SK-N-SH (cell line): ENCODE measurements at regions of chr9 and their contacts with region 1.

Region 1: GRCh38 chr9:2727966-2728613 is 10.8 kb downstream of the KCNV2 start:
- DNase-seq: peak; percentile 40
- H3K4me3 ChIP-seq: no peak overlapping the region
- H3K27ac ChIP-seq: no peak overlapping the region
- H3K4me1 ChIP-seq: peaks cover 7 to 12% of the 10 kb centered on the region in 2 experiments; a peak in 2 of 4 replicates
- H3K27me3 ChIP-seq: no peaks in the 10 kb centered on the region
- CTCF ChIP-seq: peak; percentile 65
- EP300 ChIP-seq: no peak
- RAD21 ChIP-seq: peak; percentile 88

Region 2: DNA sequence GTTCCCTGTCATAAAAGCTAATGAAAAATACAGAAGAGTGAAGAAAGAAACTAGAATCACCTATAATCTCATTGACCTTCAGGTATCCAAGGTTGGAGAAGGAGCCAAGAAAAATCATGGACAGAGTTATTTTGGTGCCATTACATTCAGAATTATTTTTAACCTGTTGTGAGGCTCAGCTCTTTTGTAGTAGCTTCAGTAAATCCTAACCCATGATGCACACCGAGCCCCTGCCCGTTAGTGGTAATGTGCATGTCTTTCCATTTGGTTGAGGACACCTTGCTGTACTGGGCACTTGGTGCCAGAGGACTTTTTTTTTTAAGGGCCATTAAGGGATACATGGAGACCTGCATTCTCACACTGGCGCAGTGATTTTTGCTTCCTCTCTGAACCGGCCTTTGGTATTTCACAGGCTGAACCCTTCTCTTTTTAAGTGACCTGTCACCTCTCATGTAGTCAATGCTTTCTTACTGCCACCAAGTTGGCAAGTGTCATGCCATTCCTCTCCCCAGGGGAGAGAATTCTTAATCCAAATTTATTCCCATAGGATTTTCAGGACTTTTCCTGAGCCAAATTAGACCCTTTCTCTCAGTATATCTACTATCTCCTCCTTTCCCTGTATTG is 587.4 kb before region 1 on chr9:
- CTCF ChIA-PET with region 1: interaction called, 15 read pairs
- POLR2A ChIA-PET with region 1: no interaction called
- DNase-seq: no peak
- H3K4me3 ChIP-seq: no peak overlapping the region
- H3K27ac ChIP-seq: no peak overlapping the region
- H3K4me1 ChIP-seq: no peaks in the 10 kb centered on the region
- H3K27me3 ChIP-seq: no peaks in the 10 kb centered on the region
- CTCF ChIP-seq: no peak
- EP300 ChIP-seq: no peak
- RAD21 ChIP-seq: no peak

Region 3: GRCh38 chr9:2740616-2741015 is 12.5 kb after region 1 on chr9:
- CTCF ChIA-PET with region 1: interaction called, 30 read pairs
- POLR2A ChIA-PET with region 1: no interaction called
- DNase-seq: no peak
- H3K4me3 ChIP-seq: no peak overlapping the region
- H3K27ac ChIP-seq: no peak overlapping the region
- H3K4me1 ChIP-seq: peaks cover 0 to 2% of the 10 kb centered on the region in 2 experiments; a peak in 2 of 4 replicates
- H3K27me3 ChIP-seq: no peaks in the 10 kb centered on the region
- CTCF ChIP-seq: no peak
- EP300 ChIP-seq: no peak
- RAD21 ChIP-seq: no peak

Region 4: GRCh38 chr9:2745560-2746380 is 17.7 kb after region 1 on chr9:
- CTCF ChIA-PET with region 1: interaction called, 30 read pairs
- POLR2A ChIA-PET with region 1: no interaction called
- DNase-seq: peak; percentile 41
- H3K4me3 ChIP-seq: no peak overlapping the region
- H3K27ac ChIP-seq: peak overlapping the region in 1 of 2 experiments; percentile 34; a peak in 1 of 4 replicates
- H3K4me1 ChIP-seq: peaks cover 0 to 10% of the 10 kb centered on the region in 2 experiments; a peak in 2 of 4 replicates
- H3K27me3 ChIP-seq: no peaks in the 10 kb centered on the region
- CTCF ChIP-seq: no peak
- EP300 ChIP-seq: no peak
- RAD21 ChIP-seq: no peak